Lower leg skin (tissue), 4 donors: ENCODE measurements at regions of chr17 and their contacts with region 1.

Region 1: GRCh38 chr17:66906321-66907278 is 57.9 kb upstream of the CACNG4 start:
- DNase-seq: peak; percentile 69 to 94
- H3K4me3 ChIP-seq: no peak overlapping the region
- CTCF ChIP-seq: peak in 1 of 3 donors; percentile 59
- POLR2A ChIP-seq: no peak

Region 2: GRCh38 chr17:66200685-66201092 is 705.9 kb before region 1 on chr17:
- intact Hi-C with region 1: loop called (anchors 10 kb)
- DNase-seq: peak in 1 of 2 donors; percentile 17
- H3K4me3 ChIP-seq: no peak overlapping the region
- CTCF ChIP-seq: peak in 1 of 3 donors; percentile 76
- POLR2A ChIP-seq: no peak

Region 3: GRCh38 chr17:66951935-66952662 is 45.5 kb after region 1 on chr17:
- intact Hi-C with region 1: no loop called
- DNase-seq: peak in 1 of 2 donors; percentile 21
- H3K4me3 ChIP-seq: no peak overlapping the region
- CTCF ChIP-seq: no peak
- POLR2A ChIP-seq: no peak